Ascending aorta (tissue), 2 donors: ENCODE measurements at regions of chr1 and their contacts with region 1.

Region 1: DNA sequence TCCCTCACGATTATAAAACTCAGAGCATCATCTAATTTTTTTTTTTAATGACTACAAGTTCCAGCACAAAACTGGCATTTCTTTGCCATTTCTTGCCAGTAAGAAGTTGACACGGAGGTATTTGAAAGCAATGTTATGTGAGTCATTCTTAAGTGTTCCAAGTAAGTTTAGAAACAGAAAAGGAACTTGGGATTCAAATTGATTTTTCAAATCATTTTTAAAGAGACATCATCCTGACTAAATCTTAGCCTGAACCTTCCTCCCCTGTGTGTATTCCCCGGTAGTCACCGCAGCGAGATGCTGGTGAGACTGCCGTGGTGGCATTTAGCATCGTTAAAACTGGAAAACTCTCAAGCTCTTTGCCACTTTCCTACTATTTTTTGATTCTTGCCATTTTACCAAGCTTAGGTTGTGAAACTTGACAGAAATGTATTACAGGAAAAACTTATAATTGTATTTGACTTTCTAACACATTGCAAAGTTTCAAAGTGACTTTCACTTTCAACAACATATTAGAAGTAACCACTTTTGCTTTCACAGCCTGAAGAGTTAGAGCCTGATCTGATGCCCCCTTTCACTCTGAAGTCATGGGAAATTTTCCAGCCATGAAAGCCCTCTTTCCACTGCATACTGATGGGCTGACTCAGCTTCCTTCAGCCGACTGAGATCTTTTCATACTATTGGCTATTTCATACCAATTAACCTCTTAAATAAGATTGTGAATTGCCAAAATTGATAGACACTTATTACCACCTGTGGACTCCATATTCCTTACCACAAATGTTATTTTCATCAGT is 61.4 kb downstream of the OLFML2B start:
- DNase-seq: no peak
- H3K4me3 ChIP-seq: peak overlapping the region; percentile 50 to 56
- H3K27ac ChIP-seq: peak overlapping the region; percentile 69 to 86
- H3K4me1 ChIP-seq: peaks cover 6 to 15% of the 10 kb centered on the region in 2 donors
- H3K27me3 ChIP-seq: no peaks in the 10 kb centered on the region
- CTCF ChIP-seq: peak in 1 of 3 experiments; percentile 7

Region 2: GRCh38 chr1:161766102-161766981 is 195.9 kb before region 1 on chr1 and contains the start of gene ATF6:
- intact Hi-C with region 1: loop called (anchors 5 kb)
- DNase-seq: peak; percentile 75 to 96
- H3K4me3 ChIP-seq: peak within 1 kb of the TSS; percentile 55 to 93
- H3K27ac ChIP-seq: peak within 1 kb of the TSS; percentile 77 to 91
- H3K4me1 ChIP-seq: peaks cover 0 to 16% of the 10 kb centered on the region in 2 donors
- H3K27me3 ChIP-seq: no peaks in the 10 kb centered on the region
- CTCF ChIP-seq: no peak
- total RNA-seq, gene ATF6: 12.3 TPM

Region 3: DNA sequence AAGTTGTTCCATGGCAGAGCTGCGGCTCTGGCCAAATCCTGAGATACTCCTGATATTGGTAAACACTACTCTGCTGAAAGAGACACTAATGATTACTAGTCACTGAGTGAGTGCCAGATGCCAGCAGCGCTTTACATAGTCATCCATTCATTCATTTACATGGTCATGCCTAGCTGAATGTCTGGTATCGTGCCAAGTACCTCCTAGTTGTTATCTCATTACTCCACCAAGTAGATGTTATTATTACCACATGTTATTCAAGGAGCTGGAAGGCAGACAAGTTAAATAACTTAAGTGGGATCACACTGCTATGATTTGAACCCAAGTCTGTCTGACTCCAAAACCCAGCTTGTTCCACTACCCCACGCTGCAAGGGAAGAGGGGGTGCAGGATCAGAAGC is 56.7 kb after region 1 on chr1:
- intact Hi-C with region 1: loop called (anchors 2 kb)
- DNase-seq: no peak
- H3K4me3 ChIP-seq: no peak overlapping the region
- H3K27ac ChIP-seq: peak overlapping the region; percentile 58 to 85
- H3K4me1 ChIP-seq: peaks cover 8 to 37% of the 10 kb centered on the region in 2 donors
- H3K27me3 ChIP-seq: no peaks in the 10 kb centered on the region
- CTCF ChIP-seq: no peak

Region 4: DNA sequence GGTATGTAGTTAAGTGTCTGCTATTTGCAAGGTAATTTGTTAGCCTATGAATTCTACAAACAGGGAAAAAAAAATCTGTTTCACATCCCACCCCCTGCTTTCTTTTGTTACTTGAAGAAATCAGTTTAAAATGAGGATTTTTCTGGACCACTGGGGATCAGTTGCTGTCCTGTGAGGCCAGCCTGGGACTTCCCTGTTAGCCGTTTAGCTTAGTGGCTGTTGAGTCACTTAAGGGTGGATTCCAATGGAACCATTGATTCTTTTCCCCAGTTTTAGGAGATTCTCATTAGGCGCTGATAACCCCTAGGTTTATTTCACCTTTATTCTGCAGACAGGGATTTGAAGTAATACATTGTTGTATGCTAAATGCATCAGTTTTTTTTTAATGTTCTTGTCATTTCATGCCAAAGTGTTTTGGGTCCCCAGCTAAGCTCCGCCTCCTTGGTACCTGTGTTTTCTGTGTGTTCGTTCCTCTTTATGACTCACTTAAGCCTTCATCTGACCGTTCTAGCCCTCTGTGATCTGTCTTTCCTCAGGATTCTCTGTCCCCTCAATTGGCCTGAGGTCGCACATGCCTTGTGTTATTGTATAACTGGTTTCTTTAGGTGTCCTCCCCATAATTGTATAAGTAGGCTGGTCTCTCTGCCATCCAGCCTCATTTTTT is 166.5 kb after region 1 on chr1:
- intact Hi-C with region 1: no loop called
- DNase-seq: no peak
- H3K4me3 ChIP-seq: no peak overlapping the region
- H3K27ac ChIP-seq: no peak overlapping the region
- H3K4me1 ChIP-seq: peaks cover 0 to 6% of the 10 kb centered on the region in 2 donors
- H3K27me3 ChIP-seq: no peaks in the 10 kb centered on the region
- CTCF ChIP-seq: no peak